Panc1 (cell line): ENCODE measurements at regions of chr1 and their contacts with region 1.

Region 1: GRCh38 chr1:4825800-4826450 is 171.5 kb downstream of the AJAP1 start:
- DNase-seq: peak; percentile 1
- ATAC-seq: no peak
- H3K4me3 ChIP-seq: no peak overlapping the region
- H3K27ac ChIP-seq: no peak overlapping the region
- H3K4me1 ChIP-seq: no peaks in the 10 kb centered on the region
- H3K27me3 ChIP-seq: no peaks in the 10 kb centered on the region
- CTCF ChIP-seq: peak; percentile 60

Region 2: DNA sequence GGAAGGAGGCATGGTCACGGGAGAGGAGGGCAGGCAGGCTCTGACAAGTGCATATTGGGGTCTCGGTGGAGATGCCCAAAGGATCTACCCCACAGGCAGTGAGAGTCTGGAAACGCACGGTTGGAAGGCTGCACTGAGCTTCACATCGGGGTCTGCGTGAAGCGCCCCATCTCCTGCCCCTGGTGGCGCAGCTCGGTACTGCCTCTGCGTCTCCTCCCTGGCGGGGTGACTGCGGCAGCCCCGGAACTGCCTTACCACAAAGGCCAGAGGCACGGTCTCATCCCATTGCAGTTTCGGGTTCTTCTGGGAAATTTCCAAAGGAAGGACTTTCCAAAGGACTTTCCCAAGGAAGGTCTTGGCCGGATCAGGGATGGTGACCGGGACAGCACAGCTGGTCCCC is 240.7 kb before region 1 on chr1:
- CTCF ChIA-PET with region 1: no interaction called
- POLR2A ChIA-PET with region 1: no interaction called
- in situ Hi-C with region 1: no loop called
- intact Hi-C with region 1: no loop called
- DNase-seq: no peak
- ATAC-seq: no peak
- H3K4me3 ChIP-seq: no peak overlapping the region
- H3K27ac ChIP-seq: no peak overlapping the region
- H3K4me1 ChIP-seq: no peaks in the 10 kb centered on the region
- H3K27me3 ChIP-seq: peaks cover 13% of the 10 kb centered on the region
- CTCF ChIP-seq: peak; percentile 70

Region 3: DNA sequence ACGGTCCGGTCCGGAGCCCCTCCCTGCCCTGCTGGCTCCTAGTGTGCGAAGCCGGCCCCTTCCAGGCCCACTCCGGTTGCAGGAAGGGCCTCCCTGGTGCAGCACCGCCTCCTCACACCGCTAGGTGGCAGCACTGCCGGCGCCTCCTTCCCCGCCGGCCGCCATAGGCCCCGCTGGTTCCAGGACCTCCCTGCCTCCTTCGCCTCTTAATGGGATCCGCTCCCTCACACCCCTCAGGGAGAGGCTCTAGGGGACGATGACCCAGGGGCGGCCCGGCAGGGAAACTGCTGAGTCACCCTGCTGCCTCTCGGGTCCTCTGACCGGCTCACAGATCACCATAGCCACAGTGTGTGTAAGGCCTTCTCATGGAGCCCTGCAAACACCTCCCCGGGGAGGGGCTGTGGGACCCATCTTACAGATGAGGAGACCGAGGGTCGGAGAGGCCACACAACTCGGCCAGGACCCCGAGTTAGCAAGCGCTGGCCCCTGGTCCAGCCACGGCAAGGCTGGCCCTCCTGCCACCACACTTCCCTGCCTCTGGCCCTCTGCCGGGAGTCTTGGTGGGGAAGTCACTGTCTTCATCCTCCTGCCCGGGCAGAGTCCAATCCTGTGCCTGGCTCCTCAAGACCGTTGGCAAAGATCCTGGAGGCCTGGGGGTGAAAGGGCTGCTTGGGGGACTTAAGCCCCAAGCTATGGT is 173.1 kb before region 1 on chr1:
- CTCF ChIA-PET with region 1: no interaction called
- POLR2A ChIA-PET with region 1: no interaction called
- in situ Hi-C with region 1: no loop called
- intact Hi-C with region 1: loop called (anchors 10 kb)
- DNase-seq: no peak
- ATAC-seq: peak; percentile 85
- H3K4me3 ChIP-seq: no peak overlapping the region
- H3K27ac ChIP-seq: no peak overlapping the region
- H3K4me1 ChIP-seq: peaks cover 7% of the 10 kb centered on the region
- H3K27me3 ChIP-seq: no peaks in the 10 kb centered on the region; the same call in 1 of the 2 replicates
- CTCF ChIP-seq: peak; percentile 96